ENCODE measurements at regions of chr16 and their contacts with region 1.

Region 1: GRCh38 chr16:88448461-88449266 is 4.4 kb upstream of the ZFPM1 start:
- DNase-seq: no peak

Region 2: GRCh38 chr16:88527186-88527936 is 78.7 kb after region 1 on chr16:
- intact Hi-C with region 1: loop called (anchors 5 kb)
- DNase-seq: peak in 33 of 42 donors; percentile 31 to 82 (median 60)